ENCODE measurements at regions of chr11 and their contacts with region 1.

Region 1: GRCh38 chr11:44883277-44883676 is 67.4 kb downstream of the TP53I11 start:
- DNase-seq: peak; percentile 32
- H3K4me3 Mint-ChIP-seq: no peak overlapping the region
- H3K27ac Mint-ChIP-seq: no peak overlapping the region
- H3K4me1 Mint-ChIP-seq: peaks cover 9% of the 10 kb centered on the region
- H3K27me3 Mint-ChIP-seq: no peaks in the 10 kb centered on the region

Region 2: DNA sequence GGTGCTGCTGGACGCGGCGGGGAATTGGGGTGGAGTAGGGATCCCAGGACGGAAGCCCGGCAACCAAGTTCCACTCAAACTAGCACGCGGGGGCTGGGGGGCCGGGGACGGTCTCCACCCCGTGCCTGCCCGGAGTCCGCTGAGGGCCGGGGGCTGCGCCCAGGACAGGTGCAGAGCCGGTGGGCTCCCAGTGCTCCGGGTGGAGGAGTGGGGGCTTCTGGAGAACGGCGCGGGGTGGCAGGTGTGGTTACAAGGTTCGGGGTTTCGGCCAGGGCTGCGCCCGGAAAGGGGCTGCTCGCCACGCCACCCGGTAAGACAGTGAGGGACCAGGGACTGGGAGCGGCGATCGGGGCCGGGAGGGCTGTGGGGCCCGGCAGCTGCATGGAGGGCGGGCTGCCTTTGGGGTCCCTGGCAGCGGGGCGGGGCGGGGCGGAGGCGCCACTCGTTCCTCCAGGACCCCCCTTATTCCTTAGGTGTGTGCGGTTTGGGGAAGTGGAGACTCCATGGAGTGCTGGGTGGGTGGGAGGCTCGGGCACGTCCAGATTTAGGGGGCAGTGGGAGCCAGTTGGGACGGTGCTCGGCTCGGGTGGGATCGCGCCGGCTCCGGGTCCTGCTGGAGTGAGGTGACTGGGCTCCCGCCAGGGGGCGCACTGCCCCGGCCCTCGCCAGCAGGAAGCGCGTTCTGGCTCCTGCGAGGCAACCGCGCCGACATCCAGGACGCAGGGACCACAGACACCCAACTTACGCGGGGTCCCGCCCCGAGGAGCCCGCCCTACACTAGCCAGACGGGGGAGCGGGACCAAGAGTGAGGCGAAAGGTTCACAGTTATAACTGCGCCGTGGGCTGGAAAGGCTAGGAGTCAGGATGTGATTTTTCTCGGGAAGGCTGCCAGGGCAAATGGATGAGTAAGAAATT is 155.6 kb before region 1 on chr11:
- CTCF ChIA-PET with region 1: no interaction called
- POLR2A ChIA-PET with region 1: no interaction called
- intact Hi-C with region 1: loop called (anchors 1 kb)
- DNase-seq: peak; percentile 88
- H3K4me3 Mint-ChIP-seq: peak overlapping the region; percentile 82
- H3K27ac Mint-ChIP-seq: peak overlapping the region; percentile 67
- H3K4me1 Mint-ChIP-seq: peaks cover 51% of the 10 kb centered on the region
- H3K27me3 Mint-ChIP-seq: no peaks in the 10 kb centered on the region

Region 3: DNA sequence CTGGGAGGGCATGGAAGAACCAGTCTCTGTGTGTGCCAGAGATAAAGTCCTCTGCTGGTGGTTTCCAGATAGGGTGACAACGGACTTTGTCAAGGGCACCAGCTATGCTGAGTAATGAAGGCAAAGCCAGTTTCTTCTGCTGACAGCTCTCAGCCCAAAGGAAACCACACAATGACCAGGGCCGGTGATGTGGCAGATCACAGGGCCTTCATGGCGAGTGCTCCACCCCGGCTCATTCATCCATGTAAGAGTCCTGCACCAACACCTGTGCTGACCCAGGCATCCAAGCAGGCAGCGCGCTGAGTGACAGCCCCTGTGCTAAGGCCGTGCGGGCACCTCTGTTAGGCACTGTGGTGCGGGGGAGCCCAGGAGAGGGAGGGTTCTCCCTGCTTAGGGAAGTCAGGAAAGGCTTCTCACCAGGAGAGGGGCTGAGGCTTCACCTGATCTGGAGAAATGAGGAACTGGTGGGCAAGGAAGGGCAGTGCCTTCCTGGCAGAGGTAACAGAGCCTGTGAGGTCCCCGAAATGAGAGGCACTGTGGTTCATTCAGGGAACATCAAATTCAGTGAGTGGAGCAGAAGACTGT is 33.6 kb after region 1 on chr11:
- CTCF ChIA-PET with region 1: no interaction called
- POLR2A ChIA-PET with region 1: no interaction called
- intact Hi-C with region 1: no loop called
- DNase-seq: no peak
- H3K4me3 Mint-ChIP-seq: no peak overlapping the region
- H3K27ac Mint-ChIP-seq: no peak overlapping the region
- H3K4me1 Mint-ChIP-seq: no peaks in the 10 kb centered on the region
- H3K27me3 Mint-ChIP-seq: no peaks in the 10 kb centered on the region

Region 4: DNA sequence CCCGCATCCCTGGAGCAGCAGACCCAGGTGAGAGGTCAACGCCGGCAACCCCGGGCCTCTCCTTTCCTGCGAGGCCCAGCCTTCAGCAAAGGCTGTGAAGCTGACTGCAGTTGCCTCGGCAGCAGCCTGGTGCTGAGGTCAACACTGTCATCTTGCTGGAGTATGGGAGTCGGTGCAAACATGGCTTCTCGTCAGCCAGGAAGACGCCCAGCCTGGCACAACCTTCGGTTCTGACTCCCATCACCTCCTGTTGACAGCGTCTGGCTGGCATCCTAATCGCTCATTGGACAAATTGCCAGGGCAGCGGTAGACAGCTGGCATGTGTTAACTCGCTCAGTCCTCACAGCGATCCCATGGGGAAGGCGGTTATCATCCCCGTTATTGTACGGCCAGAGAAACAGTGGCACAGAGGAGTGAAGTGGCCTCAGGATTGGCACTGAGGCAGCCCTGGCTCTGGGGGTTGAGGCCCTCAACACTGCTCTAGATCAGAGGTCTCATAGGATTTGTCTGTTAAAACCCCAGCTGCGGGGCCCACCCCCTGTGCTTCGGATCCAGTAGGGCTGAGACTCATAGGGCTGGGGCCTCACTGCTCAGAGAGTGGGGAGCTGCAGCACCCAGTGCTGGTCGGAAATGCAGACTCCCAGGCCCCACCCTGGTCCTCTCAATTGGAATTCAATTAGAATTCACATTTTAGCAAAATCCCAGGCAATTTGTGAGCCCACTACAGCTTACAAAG is 106.7 kb after region 1 on chr11:
- CTCF ChIA-PET with region 1: no interaction called
- POLR2A ChIA-PET with region 1: no interaction called
- intact Hi-C with region 1: no loop called
- DNase-seq: no peak
- H3K4me3 Mint-ChIP-seq: no peak overlapping the region
- H3K27ac Mint-ChIP-seq: no peak overlapping the region
- H3K4me1 Mint-ChIP-seq: no peaks in the 10 kb centered on the region
- H3K27me3 Mint-ChIP-seq: peaks cover 1% of the 10 kb centered on the region

Measured in activated CD4-positive, alpha-beta memory T cell treated with anti-CD3 and anti-CD28 coated beads for 36 hours (primary cell).